Activated CD4-positive, alpha-beta T cell treated with anti-CD3 and anti-CD28 coated beads, Interleukin-2, amount 10 ng/mL, durations not matched to agents 7 days and 5 days (primary cell): ENCODE measurements at regions of chr20 and their contacts with region 1.

Region 1: DNA sequence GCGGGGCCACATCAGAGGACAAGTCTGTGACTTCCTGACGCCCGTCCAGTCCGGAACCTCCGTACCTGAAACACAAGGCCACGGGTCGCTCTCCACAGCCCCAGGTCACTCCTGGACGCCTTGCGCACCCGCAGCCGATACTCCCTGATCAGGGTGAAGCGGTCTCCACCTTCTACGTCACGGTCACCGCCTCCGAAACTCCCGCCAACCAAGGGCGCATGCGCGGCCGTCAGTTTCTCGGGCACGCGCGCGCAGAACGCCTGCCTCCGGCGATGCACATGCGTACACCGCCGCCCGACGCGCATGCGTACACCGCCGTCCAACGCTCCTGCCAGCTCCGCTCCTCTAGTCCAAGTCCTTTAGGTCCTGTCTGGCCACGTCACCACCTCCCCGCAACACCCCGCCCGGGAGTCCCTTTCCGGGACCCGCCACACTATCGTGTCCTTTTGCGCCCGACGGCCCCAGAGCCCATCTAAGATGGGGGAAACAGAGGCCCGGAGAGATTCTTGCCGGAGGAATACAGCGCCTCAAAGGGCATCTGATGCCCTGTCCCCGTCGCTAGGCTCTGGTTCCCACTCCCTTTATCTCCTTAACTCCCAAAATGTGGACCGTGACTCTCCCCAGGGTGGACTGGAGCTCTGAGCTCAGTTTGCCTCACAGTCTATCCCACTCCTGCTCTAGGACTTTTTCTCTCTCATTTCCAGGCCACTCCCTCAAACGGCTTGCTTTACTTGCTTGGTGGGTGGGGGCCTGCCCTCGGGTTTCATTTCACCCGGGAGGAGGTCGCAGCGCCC is at the start of gene DSN1:
- DNase-seq: peak; percentile 98
- H3K4me3 Mint-ChIP-seq: peak within 1 kb of the TSS; percentile 88
- H3K27ac Mint-ChIP-seq: peak within 1 kb of the TSS; percentile 95
- H3K4me1 Mint-ChIP-seq: peaks cover 44% of the 10 kb centered on the region
- H3K27me3 Mint-ChIP-seq: no peaks in the 10 kb centered on the region
- total RNA-seq, gene DSN1: 33.5 to 35.3 TPM

Region 2: GRCh38 chr20:36736451-36737182 is 37.2 kb before region 1 on chr20:
- CTCF ChIA-PET with region 1: interaction called, 16 read pairs
- POLR2A ChIA-PET with region 1: no interaction called
- DNase-seq: no peak
- H3K4me3 Mint-ChIP-seq: no peak overlapping the region
- H3K27ac Mint-ChIP-seq: no peak overlapping the region
- H3K4me1 Mint-ChIP-seq: peaks cover 28% of the 10 kb centered on the region
- H3K27me3 Mint-ChIP-seq: no peaks in the 10 kb centered on the region

Region 3: DNA sequence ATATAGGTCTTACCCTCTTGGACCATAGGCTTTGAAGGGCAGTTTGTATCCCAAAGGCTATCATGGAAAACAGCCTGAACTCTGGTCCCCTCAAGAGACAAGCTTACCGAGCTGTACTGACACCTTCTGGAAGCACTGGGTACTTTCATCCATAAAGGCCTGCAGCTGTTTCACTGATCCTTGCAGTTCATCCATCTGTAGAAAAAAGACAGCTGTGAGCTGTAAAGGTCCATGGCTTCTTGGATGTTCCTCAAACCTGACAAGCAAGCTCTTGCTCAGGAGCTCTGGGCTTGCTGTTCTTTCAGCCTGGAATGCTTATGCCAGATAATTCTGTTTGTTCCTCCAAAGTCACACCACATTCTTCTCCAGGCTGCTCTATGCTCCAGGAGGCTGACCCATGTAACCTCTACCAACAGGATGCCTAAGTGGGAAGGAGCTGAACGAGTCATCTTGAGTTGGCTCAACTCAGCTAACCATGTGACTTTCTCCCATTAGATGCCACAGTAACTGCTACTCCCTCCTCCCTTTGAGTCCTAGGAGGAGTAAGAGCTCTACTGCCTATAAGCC is 19.1 kb before region 1 on chr20:
- CTCF ChIA-PET with region 1: interaction called, 11 read pairs
- POLR2A ChIA-PET with region 1: no interaction called
- DNase-seq: peak; percentile 66
- H3K4me3 Mint-ChIP-seq: no peak overlapping the region
- H3K27ac Mint-ChIP-seq: no peak overlapping the region
- H3K4me1 Mint-ChIP-seq: peaks cover 9% of the 10 kb centered on the region
- H3K27me3 Mint-ChIP-seq: no peaks in the 10 kb centered on the region